ENCODE measurements at regions of chr15 and their contacts with region 1.

Region 1: GRCh38 chr15:38817427-38818156 is 253.0 kb upstream of the RASGRP1 start:
- DNase-seq: peak; percentile 43 to 84 (median 72)
- ATAC-seq: peak; percentile 93
- H3K4me3 ChIP-seq: no peak overlapping the region
- H3K4me3 Mint-ChIP-seq: peak overlapping the region in 3 of 10 donors; percentile 13 to 39 (median 30)
- H3K27ac ChIP-seq: no peak overlapping the region
- H3K27ac Mint-ChIP-seq: no peak overlapping the region
- H3K4me1 ChIP-seq: no peaks in the 10 kb centered on the region
- H3K4me1 Mint-ChIP-seq: peaks cover 0 to 5% (median 0%) of the 10 kb centered on the region in 7 donors
- H3K27me3 ChIP-seq: no peaks in the 10 kb centered on the region
- H3K27me3 Mint-ChIP-seq: peaks cover 0 to 15% (median 13%) of the 10 kb centered on the region in 5 donors

Region 2: DNA sequence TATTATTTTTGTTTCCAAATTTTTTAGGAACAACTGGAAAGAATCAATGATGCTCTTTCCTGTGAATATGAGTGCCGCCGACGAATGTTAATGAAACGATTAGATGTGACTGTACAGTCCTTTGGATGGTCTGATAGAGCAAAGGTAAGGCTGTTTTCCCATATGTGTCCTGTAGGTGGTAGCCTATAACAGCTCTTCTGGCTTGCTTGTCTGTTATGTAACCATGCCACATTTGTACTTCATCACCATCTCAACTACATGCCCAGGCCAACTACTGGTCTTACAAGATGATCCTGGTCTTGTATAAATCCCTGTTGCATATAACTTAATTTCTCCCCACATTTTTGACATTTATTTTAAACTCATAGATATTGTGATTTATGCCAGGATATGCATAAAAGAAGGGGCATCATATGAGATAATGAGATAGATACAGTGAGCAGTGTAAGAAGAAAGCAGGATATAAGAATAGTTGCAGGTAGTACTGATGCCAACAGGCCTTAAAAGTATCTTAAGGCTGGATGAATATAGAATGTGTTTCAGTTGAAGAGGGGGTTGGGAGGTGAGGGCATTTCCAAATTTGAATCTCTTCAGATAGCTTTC is 343.3 kb before region 1 on chr15:
- CTCF ChIA-PET with region 1: no interaction called
- POLR2A ChIA-PET with region 1: no interaction called
- intact Hi-C with region 1: loop called in 1 of 2 experiments (anchors 1 kb)
- DNase-seq: peak in 7 of 9 donors; percentile 53 to 75 (median 62)
- ATAC-seq: peak; percentile 100
- H3K4me3 ChIP-seq: no peak overlapping the region
- H3K4me3 Mint-ChIP-seq: peak overlapping the region in 2 of 10 donors; percentile 4 to 10
- H3K27ac ChIP-seq: no peak overlapping the region
- H3K27ac Mint-ChIP-seq: peak overlapping the region; percentile 10 to 88 (median 81)
- H3K4me1 ChIP-seq: peaks cover 0 to 5% of the 10 kb centered on the region in 2 donors
- H3K4me1 Mint-ChIP-seq: peaks cover 10 to 23% (median 13%) of the 10 kb centered on the region in 7 donors
- H3K27me3 ChIP-seq: no peaks in the 10 kb centered on the region
- H3K27me3 Mint-ChIP-seq: no peaks in the 10 kb centered on the region

Region 3: DNA sequence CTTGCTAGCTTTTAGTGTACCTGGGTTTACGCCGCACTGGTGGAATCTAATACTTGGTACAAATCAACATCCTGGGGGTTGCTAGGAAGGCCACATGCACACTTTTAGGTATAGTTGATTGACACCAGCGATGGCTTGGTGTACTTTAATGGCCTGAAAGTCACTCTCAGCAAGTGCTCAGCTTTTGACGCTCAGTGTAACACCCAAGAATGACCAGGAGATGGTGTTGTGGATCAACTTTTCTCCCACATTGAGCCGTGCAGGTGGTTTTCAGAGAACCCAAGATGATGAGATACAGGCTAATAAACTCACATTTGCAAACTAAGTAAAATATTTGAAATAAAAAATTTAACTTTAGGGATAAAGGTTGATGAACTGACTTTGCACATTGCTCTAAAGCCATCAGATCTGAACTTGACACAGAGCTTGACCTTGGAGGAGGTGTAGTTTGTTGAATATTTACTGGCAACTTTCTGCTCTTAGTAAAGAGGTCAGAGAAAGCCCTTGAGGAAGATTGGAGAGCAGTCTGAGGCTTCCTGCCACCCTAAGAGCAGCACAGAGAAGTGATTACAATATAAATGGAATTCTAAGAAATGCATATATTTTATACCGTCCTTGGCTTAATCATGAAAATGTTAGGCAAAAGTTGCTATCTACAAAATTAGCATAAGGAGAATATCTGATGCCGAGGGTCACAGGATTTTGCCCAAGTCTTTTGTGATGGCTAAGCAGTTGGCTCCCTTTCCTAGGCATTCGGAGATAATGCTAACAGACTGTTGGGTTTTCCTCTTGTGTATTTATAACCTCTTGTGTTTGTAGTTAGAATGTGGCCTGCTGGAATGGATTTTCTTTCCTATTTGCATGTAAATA is 109.6 kb before region 1 on chr15:
- CTCF ChIA-PET with region 1: no interaction called
- POLR2A ChIA-PET with region 1: no interaction called
- intact Hi-C with region 1: loop called (anchors 1 to 5 kb)
- DNase-seq: peak in 5 of 9 donors; percentile 36 to 60 (median 51)
- ATAC-seq: peak; percentile 84
- H3K4me3 ChIP-seq: no peak overlapping the region
- H3K4me3 Mint-ChIP-seq: no peak overlapping the region
- H3K27ac ChIP-seq: no peak overlapping the region
- H3K27ac Mint-ChIP-seq: no peak overlapping the region
- H3K4me1 ChIP-seq: no peaks in the 10 kb centered on the region
- H3K4me1 Mint-ChIP-seq: peaks cover 0 to 25% (median 0%) of the 10 kb centered on the region in 7 donors
- H3K27me3 ChIP-seq: no peaks in the 10 kb centered on the region
- H3K27me3 Mint-ChIP-seq: peaks cover 0 to 23% (median 0%) of the 10 kb centered on the region in 5 donors

Region 4: DNA sequence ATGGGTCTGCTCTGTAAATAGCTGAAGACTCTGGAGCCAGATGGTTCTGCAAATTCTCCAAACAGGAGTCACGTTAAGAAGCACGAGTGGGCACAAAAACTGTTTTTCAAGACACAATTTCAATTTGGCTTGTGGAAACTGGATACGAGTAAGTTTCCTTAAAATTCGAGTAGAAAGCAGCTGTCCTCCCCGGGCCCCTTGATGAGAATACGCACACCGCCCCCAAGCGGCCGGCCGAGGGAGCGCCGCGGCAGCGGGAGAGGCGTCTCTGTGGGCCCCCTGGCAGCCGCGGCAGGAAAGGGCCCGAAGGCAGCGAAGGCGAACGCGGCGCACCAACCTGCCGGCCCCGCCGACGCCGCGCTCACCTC is 762.5 kb after region 1 on chr15:
- CTCF ChIA-PET with region 1: no interaction called
- POLR2A ChIA-PET with region 1: no interaction called
- intact Hi-C with region 1: loop called (anchors 1 kb)
- DNase-seq: peak; percentile 23 to 91 (median 63)
- ATAC-seq: peak; percentile 92
- H3K4me3 ChIP-seq: peak overlapping the region; percentile 26
- H3K4me3 Mint-ChIP-seq: peak overlapping the region in 7 of 10 donors; percentile 16 to 82 (median 64)
- H3K27ac ChIP-seq: no peak overlapping the region
- H3K27ac Mint-ChIP-seq: no peak overlapping the region
- H3K4me1 ChIP-seq: peaks cover 0 to 11% of the 10 kb centered on the region in 2 donors
- H3K4me1 Mint-ChIP-seq: peaks cover 0 to 31% (median 14%) of the 10 kb centered on the region in 7 donors
- H3K27me3 ChIP-seq: peaks cover 0 to 5% of the 10 kb centered on the region in 2 donors
- H3K27me3 Mint-ChIP-seq: peaks cover 53 to 74% (median 66%) of the 10 kb centered on the region in 5 donors

Region 5: GRCh38 chr15:39874890-39875549 is 1057.4 kb after region 1 on chr15:
- CTCF ChIA-PET with region 1: no interaction called
- POLR2A ChIA-PET with region 1: no interaction called
- intact Hi-C with region 1: loop called in 1 of 2 experiments (anchors 10 kb)
- DNase-seq: peak in 5 of 9 donors; percentile 2 to 21 (median 9)
- ATAC-seq: peak; percentile 51
- H3K4me3 ChIP-seq: no peak overlapping the region
- H3K4me3 Mint-ChIP-seq: no peak overlapping the region
- H3K27ac ChIP-seq: no peak overlapping the region
- H3K27ac Mint-ChIP-seq: no peak overlapping the region
- H3K4me1 ChIP-seq: no peaks in the 10 kb centered on the region
- H3K4me1 Mint-ChIP-seq: no peaks in the 10 kb centered on the region
- H3K27me3 ChIP-seq: no peaks in the 10 kb centered on the region
- H3K27me3 Mint-ChIP-seq: peaks cover 0 to 21% (median 0%) of the 10 kb centered on the region in 5 donors